ENCODE measurements at regions of chr6 and their contacts with region 1.

Region 1: GRCh38 chr6:136792410-136793262 is at the start of gene MAP3K5:
- DNase-seq: peak; percentile 95
- ATAC-seq: peak; percentile 86
- H3K4me3 Mint-ChIP-seq: peak within 1 kb of the TSS; percentile 96
- H3K27ac Mint-ChIP-seq: peak within 1 kb of the TSS; percentile 97
- H3K4me1 Mint-ChIP-seq: peaks cover 35% of the 10 kb centered on the region
- H3K27me3 Mint-ChIP-seq: no peaks in the 10 kb centered on the region
- total RNA-seq, gene MAP3K5: 15.0 to 15.1 TPM

Region 2: DNA sequence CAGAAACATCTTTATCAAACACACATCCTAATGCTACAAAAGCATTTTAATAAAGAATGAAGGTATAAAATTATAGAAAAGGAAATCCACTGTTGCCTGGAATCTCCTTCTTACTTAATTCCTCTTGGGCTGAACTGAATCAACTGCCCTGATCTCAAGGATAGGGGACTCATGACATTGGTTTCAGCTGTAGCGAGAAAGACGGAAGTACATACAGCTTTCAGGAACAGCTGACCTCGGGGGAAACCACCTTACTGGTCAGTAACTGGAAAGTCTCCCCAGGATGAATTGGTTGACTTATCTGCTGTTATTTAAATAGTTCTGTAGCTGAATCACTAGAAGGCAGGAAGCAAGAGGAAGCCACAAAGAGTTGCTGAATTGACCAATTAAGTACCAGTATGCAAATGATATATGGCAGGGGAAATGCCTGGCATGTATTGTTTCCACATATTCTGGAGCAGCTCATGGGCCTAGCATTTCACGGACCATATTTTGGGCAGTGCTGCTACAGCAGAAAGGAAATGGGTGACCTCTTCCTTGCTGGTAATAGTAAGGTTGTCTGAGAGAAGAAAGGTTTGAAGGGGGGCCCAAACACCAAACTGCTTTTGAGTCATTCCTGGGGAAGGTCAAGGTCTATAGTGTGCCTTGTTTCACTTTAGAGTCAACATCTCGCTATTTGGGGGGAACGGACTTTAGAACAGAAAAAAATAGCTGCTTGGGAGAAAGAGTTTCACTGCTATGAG is 198.7 kb before region 1 on chr6:
- CTCF ChIA-PET with region 1: interaction called, 19 read pairs
- POLR2A ChIA-PET with region 1: interaction called, 9 read pairs
- DNase-seq: peak; percentile 60
- ATAC-seq: peak; percentile 92
- H3K4me3 Mint-ChIP-seq: peak overlapping the region; percentile 7
- H3K27ac Mint-ChIP-seq: peak overlapping the region; percentile 78
- H3K4me1 Mint-ChIP-seq: peaks cover 20% of the 10 kb centered on the region
- H3K27me3 Mint-ChIP-seq: no peaks in the 10 kb centered on the region

Region 3: GRCh38 chr6:136614994-136615393 is 177.6 kb before region 1 on chr6:
- CTCF ChIA-PET with region 1: interaction called, 59 read pairs
- POLR2A ChIA-PET with region 1: no interaction called
- DNase-seq: no peak
- ATAC-seq: no peak
- H3K4me3 Mint-ChIP-seq: no peak overlapping the region
- H3K27ac Mint-ChIP-seq: no peak overlapping the region
- H3K4me1 Mint-ChIP-seq: peaks cover 6% of the 10 kb centered on the region
- H3K27me3 Mint-ChIP-seq: no peaks in the 10 kb centered on the region

Region 4: DNA sequence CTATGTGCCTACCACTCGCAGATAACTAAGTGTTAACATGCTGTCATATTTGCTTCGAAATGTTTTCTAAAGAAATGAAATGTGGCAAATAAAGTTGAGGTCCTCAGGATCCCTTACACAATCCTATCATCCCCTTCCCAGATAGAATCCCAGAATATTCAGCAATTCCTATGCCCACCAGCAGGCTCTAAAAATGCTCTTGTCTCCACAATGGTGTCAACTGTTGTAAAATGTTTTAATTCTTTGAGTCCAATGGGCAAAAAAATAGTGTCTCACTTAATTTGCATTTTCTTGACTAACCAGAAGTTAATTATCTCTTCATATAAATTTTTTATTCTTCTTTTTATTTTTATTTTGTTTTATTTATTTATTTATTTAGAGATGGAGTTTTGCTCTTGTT is 138.6 kb before region 1 on chr6:
- CTCF ChIA-PET with region 1: interaction called, 496 read pairs
- POLR2A ChIA-PET with region 1: interaction called, 6 read pairs
- DNase-seq: no peak
- ATAC-seq: no peak
- H3K4me3 Mint-ChIP-seq: no peak overlapping the region
- H3K27ac Mint-ChIP-seq: no peak overlapping the region
- H3K4me1 Mint-ChIP-seq: peaks cover 12% of the 10 kb centered on the region
- H3K27me3 Mint-ChIP-seq: no peaks in the 10 kb centered on the region

Region 5: DNA sequence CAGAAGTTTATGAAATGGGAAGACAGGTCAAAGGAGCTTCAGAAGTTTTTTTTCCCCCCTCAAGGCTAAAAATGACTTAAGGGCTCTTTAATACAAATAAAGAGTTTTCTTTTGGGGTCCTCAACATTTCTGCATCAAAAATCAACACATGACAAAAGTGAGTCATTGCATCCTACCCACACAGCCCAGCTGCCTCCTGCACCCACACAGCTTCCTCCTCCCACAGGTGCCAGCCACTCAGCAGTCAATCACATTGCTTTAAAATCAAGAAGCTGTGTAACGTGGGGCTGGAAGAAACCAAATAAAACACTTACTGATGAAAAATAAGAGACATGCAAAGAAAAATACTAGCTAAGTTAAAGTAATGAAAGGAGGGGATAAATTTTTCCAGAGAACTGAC is 68.9 kb before region 1 on chr6:
- CTCF ChIA-PET with region 1: interaction called, 20 read pairs
- POLR2A ChIA-PET with region 1: interaction called, 4 read pairs
- DNase-seq: peak; percentile 58
- ATAC-seq: peak; percentile 81
- H3K4me3 Mint-ChIP-seq: no peak overlapping the region
- H3K27ac Mint-ChIP-seq: no peak overlapping the region
- H3K4me1 Mint-ChIP-seq: peaks cover 33% of the 10 kb centered on the region
- H3K27me3 Mint-ChIP-seq: no peaks in the 10 kb centered on the region

Region 6: DNA sequence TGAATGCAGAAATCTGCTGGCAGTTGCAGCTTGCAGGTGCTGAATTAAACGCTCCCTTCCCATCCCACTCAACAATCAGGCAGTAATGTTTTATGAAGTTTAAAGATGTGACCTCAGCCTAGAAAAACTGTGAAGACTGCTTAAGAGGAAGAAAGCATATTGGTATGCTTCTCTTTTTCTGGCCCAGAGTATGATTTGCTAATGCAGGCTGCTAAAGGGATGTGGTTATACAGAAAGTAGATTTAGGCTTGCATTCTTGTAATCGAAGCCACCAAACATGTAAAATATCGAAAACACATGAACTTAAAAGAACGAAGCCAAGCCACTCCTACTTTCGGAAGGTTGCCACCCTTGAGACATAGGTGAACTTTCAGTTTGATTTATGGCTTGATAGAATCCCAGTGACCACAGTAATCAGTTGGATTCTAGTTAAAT is 41.1 kb before region 1 on chr6:
- CTCF ChIA-PET with region 1: interaction called, 42 read pairs
- POLR2A ChIA-PET with region 1: interaction called, 18 read pairs
- DNase-seq: peak; percentile 72
- ATAC-seq: peak; percentile 71
- H3K4me3 Mint-ChIP-seq: peak overlapping the region; percentile 56
- H3K27ac Mint-ChIP-seq: peak overlapping the region; percentile 89
- H3K4me1 Mint-ChIP-seq: peaks cover 76% of the 10 kb centered on the region
- H3K27me3 Mint-ChIP-seq: peaks cover 7% of the 10 kb centered on the region

Region 7: GRCh38 chr6:136866872-136867416 is 74.3 kb after region 1 on chr6:
- CTCF ChIA-PET with region 1: no interaction called
- POLR2A ChIA-PET with region 1: no interaction called
- DNase-seq: no peak
- ATAC-seq: no peak
- H3K4me3 Mint-ChIP-seq: no peak overlapping the region
- H3K27ac Mint-ChIP-seq: no peak overlapping the region
- H3K4me1 Mint-ChIP-seq: no peaks in the 10 kb centered on the region
- H3K27me3 Mint-ChIP-seq: no peaks in the 10 kb centered on the region

Measured in activated CD8-positive, alpha-beta T cell treated with anti-CD3 and anti-CD28 coated beads, Interleukin-2, amount 10 ng/mL, durations not matched to agents 7 days and 5 days (primary cell).